Activated naive CD4-positive, alpha-beta T cell treated with anti-CD3 and anti-CD28 coated beads, Interleukin-2, amount 10 ng/mL, durations not matched to agents 7 days and 5 days (primary cell): ENCODE measurements at regions of chr15 and their contacts with region 1.

Region 1: DNA sequence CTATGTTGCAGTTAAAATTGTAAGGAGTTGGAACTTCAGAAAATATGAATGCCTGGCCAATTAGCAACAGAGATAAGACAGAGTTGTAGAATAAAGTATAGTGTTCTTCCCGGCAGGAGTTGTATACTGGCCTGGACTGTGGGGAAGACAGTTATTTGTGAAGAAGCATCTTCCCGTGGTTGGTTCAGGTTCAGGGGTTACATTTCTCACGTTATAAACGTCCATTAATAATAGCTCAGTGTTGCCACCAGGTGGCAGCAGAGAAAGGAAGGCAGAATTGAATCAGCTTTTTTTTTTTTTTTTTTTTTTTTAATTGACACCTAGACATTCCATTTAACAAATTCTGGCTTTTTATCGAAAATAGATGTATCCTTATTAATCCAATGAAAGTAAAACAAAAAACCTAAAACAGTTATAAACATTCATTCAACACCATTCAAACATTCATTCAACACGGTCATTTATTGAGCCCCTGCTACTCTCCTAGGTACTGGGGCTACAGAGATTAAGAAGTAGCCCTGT is 66.4 kb upstream of the NR2E3 start:
- DNase-seq: peak; percentile 71
- H3K4me3 Mint-ChIP-seq: no peak overlapping the region
- H3K27ac Mint-ChIP-seq: no peak overlapping the region
- H3K4me1 Mint-ChIP-seq: no peaks in the 10 kb centered on the region
- H3K27me3 Mint-ChIP-seq: peaks cover 13% of the 10 kb centered on the region

Region 2: GRCh38 chr15:71780115-71780976 is 36.4 kb after region 1 on chr15:
- CTCF ChIA-PET with region 1: interaction called, 11 read pairs
- DNase-seq: peak; percentile 37
- H3K4me3 Mint-ChIP-seq: no peak overlapping the region
- H3K27ac Mint-ChIP-seq: no peak overlapping the region
- H3K4me1 Mint-ChIP-seq: no peaks in the 10 kb centered on the region
- H3K27me3 Mint-ChIP-seq: peaks cover 25% of the 10 kb centered on the region

Region 3: DNA sequence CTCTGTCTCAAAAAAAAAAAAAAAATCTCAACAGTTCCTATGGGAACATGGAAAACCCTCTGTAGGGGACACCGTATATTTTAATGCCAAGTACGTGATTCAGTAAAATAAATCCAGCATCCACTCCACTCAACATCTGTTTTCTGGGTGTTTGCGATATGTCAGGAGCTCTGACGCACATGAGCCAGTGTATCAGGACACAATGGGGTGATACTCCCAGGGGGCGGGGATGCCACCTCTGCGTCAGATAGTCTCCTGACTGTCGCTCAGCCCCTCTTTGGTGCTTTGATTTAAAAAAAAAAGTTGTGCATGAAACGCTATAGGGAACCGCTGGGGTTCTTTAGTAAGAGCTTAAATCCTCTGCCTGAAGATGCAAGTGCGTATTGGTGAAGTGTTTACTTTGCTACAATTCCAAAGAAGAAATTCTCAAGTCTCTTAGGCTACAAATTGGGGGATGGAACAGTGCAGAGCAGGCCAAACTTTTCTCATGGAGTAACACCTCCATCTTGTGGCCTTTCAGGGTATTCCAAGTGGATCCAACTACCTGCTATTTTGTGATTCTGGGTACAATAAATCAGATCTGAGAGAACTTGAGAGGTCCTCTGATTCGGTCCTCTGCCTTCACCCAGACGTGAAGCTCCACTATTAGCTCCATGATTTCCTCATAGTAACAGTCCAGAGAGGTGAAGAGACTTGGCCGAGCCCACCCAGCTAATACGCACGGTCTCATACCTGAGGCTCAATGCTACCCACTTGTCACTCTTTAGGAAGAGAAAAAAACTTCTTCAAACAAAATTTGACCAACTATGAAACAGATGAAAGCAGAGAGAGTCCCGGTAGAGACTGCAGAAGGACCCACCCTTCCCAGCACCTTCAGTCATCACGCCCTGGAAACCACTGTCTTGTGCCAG is 57.2 kb after region 1 on chr15:
- CTCF ChIA-PET with region 1: interaction called, 48 read pairs
- DNase-seq: peak; percentile 41
- H3K4me3 Mint-ChIP-seq: no peak overlapping the region
- H3K27ac Mint-ChIP-seq: no peak overlapping the region
- H3K4me1 Mint-ChIP-seq: no peaks in the 10 kb centered on the region
- H3K27me3 Mint-ChIP-seq: peaks cover 13% of the 10 kb centered on the region

Region 4: GRCh38 chr15:71841563-71841962 is 97.6 kb after region 1 on chr15:
- CTCF ChIA-PET with region 1: no interaction called
- DNase-seq: no peak
- H3K4me3 Mint-ChIP-seq: no peak overlapping the region
- H3K27ac Mint-ChIP-seq: no peak overlapping the region
- H3K4me1 Mint-ChIP-seq: peaks cover 3% of the 10 kb centered on the region
- H3K27me3 Mint-ChIP-seq: no peaks in the 10 kb centered on the region

Region 5: GRCh38 chr15:71997691-71998090 is 253.8 kb after region 1 on chr15:
- CTCF ChIA-PET with region 1: no interaction called
- DNase-seq: no peak
- H3K4me3 Mint-ChIP-seq: no peak overlapping the region
- H3K27ac Mint-ChIP-seq: no peak overlapping the region
- H3K4me1 Mint-ChIP-seq: no peaks in the 10 kb centered on the region
- H3K27me3 Mint-ChIP-seq: no peaks in the 10 kb centered on the region